Activated CD4-positive, alpha-beta T cell treated with anti-CD3 and anti-CD28 coated beads for 36 hours (primary cell): ENCODE measurements at regions of chr1 and their contacts with region 1.

Region 1: DNA sequence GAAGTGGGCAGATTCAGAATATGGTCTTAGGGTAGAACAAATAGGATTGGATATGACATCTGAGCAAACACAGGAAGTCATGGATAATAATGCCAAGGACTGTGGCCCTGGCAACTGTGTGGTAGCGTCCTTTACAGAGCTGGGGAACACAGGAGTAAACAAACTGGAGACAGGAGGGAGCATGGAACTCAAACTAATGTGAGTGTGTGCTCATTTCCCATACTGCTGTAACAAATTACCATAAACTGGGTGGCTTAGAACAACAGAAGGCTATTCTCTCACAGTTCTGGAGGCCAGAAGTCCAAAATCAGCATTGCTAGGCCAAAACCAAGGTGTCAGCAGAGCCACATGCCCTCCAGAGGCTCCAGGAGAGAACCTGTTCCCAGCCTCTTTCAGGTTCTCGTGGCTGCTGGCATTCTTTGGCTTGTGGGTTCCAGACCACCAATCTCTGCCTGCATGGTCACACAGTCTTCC is 106.4 kb downstream of the TGFBR3 start:
- DNase-seq: no peak
- ATAC-seq: no peak
- H3K4me3 Mint-ChIP-seq: no peak overlapping the region
- H3K27ac Mint-ChIP-seq: no peak overlapping the region
- H3K4me1 Mint-ChIP-seq: peaks cover 8% of the 10 kb centered on the region
- H3K27me3 Mint-ChIP-seq: no peaks in the 10 kb centered on the region

Region 2: GRCh38 chr1:91572044-91572443 is 207.5 kb before region 1 on chr1:
- CTCF ChIA-PET with region 1: no interaction called
- POLR2A ChIA-PET with region 1: no interaction called
- intact Hi-C with region 1: no loop called
- DNase-seq: no peak
- ATAC-seq: no peak
- H3K4me3 Mint-ChIP-seq: no peak overlapping the region
- H3K27ac Mint-ChIP-seq: no peak overlapping the region
- H3K4me1 Mint-ChIP-seq: peaks cover 27% of the 10 kb centered on the region
- H3K27me3 Mint-ChIP-seq: peaks cover 4% of the 10 kb centered on the region

Region 3: DNA sequence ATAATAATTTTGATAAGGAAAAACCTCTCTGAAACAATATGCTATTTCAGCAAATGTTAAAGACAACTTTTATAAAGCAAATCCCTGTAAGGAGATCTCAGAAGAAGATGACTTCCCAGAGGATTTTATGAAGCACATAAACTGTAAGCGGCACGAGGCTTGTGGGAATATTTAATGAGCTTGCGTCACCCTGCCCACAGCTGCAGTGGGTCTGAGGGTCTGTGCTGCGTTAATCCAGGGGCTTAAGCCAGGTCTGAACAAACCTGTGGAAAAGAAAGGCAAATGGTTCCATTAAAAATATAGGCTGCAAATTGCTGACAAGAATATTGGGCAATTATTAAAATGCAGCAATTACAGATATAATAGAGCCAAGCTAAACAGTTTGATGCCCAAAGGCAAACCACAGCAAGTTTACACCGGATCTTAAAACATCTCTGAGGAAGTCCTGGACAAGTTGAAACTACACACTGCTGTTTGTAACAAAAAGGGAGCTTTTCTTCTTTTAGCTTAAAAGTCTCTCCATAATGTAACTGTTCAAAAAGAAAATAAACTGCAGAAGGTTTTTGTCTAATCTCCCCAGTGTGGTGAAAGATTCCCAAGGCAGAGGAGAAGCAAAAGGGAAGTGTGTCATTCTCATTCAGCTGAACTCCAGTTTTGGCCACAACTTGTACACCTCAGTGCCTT is 84.6 kb after region 1 on chr1:
- CTCF ChIA-PET with region 1: interaction called, 3 read pairs
- POLR2A ChIA-PET with region 1: interaction called, 11 read pairs
- intact Hi-C with region 1: no loop called
- DNase-seq: no peak
- ATAC-seq: no peak
- H3K4me3 Mint-ChIP-seq: no peak overlapping the region
- H3K27ac Mint-ChIP-seq: no peak overlapping the region
- H3K4me1 Mint-ChIP-seq: peaks cover 5% of the 10 kb centered on the region
- H3K27me3 Mint-ChIP-seq: peaks cover 2% of the 10 kb centered on the region